Activated naive CD8-positive, alpha-beta T cell treated with anti-CD3 and anti-CD28 coated beads, Interleukin-2, amount 10 ng/mL, durations not matched to agents 7 days and 5 days (primary cell): ENCODE measurements at regions of chr2 and their contacts with region 1.

Region 1: GRCh38 chr2:241637000-241637791 is at the starts of genes ATG4B and THAP4:
- DNase-seq: peak; percentile 88
- ATAC-seq: peak; percentile 67
- H3K4me3 Mint-ChIP-seq: peak within 1 kb of the TSS; percentile 93
- H3K27ac Mint-ChIP-seq: peak within 1 kb of the TSS; percentile 94
- H3K4me1 Mint-ChIP-seq: peaks cover 38% of the 10 kb centered on the region
- H3K27me3 Mint-ChIP-seq: no peaks in the 10 kb centered on the region
- total RNA-seq, gene ATG4B: 91.1 to 101 TPM
- total RNA-seq, gene THAP4: 35.0 to 35.5 TPM

Region 2: DNA sequence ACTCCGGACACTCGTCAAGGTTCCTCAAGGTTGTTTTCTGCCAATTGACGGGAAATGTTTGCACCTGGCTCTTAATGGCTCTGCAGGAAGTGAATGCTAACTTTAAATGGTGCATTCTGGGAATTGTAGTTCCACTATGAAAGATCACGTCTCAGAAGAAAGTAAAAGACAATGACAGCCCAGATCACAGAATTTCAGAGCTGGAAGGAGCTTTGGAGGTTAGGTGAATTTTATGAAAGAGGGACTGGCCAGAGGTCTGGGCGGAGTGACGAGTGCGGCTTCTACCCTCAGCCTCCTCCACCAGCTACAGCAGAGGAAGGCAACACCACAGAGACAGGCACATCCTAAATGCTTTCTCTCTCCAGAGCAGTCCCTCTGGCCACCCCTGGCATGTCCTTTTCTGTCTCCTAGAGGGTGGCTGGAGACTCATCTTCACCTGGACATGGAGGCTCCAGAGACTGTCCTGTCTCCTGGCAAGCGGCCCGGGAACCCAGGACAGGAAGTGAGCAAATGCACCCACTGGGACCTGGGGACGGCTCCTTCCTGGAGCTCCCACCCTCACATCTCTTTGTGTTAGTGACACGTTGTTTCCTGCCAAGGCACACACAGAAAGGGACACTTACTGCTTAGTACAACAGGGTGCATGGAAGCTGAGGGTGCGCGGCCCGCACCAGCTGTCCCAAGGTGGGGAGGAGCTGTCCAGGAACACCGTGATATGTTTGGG is 19.6 kb before region 1 on chr2:
- POLR2A ChIA-PET with region 1: interaction called, 12 read pairs
- DNase-seq: peak; percentile 61
- ATAC-seq: peak; percentile 91
- H3K4me3 Mint-ChIP-seq: peak overlapping the region; percentile 92
- H3K27ac Mint-ChIP-seq: peak overlapping the region; percentile 98
- H3K4me1 Mint-ChIP-seq: peaks cover 21% of the 10 kb centered on the region
- H3K27me3 Mint-ChIP-seq: no peaks in the 10 kb centered on the region